ENCODE measurements at regions of chr17 and their contacts with region 1.

Region 1: DNA sequence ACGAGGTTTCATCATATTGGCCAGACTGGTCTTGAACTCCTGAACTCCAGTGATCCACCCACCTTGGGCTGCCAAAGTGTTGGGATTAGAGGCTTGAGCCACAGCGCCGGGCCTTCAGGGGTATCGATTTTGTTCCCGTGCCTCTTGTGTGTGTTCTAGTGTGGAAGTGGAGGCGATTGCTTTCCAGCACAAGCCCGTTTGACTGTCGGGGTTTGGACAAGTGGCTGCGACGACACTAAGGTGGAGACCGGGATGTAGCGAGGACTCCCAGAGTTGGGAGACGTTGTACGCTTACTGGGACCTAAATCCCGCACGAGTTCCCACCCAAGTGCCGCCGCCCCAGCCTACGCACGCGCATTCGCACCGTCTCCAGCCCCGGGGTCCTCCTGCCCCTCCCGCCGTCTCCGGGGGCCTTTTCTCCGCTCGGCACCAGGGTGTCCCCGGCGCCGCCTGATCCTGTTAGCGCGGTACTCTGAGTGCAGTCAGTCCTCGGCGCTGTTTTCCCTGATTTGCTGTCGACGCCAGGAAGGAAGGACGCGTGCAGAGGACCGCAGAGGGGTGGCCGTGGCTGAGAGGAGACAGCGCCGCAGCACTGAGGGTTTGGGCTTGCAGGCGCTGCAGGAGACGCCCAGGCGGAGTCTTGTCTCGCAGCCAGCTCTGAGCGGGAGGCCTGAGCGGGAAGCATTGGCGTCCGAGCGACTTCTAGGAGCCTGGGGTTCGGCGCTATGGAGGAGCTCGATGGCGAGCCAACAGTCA is at the start of gene NUP85:
- DNase-seq: peak; percentile 92 to 94 (median 93)
- ATAC-seq: peak; percentile 97
- H3K4me3 ChIP-seq: peak within 1 kb of the TSS; percentile 73 to 95
- H3K27ac ChIP-seq: peak within 1 kb of the TSS; percentile 91 to 99 (median 94)
- H3K4me1 ChIP-seq: peaks cover 20% of the 10 kb centered on the region
- H3K27me3 ChIP-seq: no peaks in the 10 kb centered on the region
- CTCF ChIP-seq: no peak
- POLR2A ChIP-seq: peak; percentile 61 to 87 (median 84)
- total RNA-seq, gene NUP85: 19.7 to 40.2 TPM

Region 2: DNA sequence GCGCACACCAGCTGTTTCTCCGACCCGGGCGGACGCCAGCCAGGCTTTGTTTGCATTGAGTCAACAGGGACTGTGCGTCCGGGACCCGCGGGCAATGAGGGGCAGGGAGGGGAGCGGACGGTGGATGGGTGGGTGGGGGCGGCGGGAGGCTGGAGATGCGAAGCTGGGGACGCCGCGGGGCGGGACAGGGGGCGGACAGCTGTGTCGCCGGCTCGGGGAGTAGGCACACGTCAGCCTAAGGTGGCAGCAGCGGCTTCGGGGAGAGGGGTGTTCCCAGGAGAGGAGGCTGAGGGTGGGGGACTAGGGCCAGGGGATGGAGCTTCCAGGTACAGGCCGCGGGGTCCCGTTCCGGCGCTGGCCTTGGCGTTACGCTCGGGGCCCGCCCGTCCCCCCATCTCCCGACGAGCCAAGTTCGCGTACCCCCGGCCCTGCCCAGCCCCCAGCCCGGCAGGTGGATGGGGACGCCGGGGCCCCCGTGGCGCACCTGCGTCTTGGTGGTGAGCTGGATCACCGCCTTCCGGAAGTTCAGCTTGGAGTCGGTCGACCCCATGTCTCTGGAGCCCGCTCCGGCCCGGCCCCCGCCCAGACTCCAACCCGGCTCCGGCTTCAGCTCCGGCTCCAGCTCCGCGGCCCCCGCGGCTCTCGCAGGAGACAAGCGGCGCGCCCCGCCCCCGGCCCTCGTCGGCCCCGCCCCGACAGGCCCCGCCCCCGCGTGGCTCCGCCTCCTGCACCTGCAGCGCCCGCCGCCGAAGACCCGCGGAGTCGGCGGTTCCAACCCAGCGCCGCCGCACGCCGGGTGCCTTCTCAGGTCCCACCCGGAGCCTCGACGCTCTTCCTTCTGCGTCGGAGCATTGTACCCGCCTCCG is 232.9 kb before region 1 on chr17 and contains the start of gene HID1:
- intact Hi-C with region 1: no loop called
- DNase-seq: peak; percentile 86 to 93 (median 87)
- ATAC-seq: peak; percentile 75
- H3K4me3 ChIP-seq: peak within 1 kb of the TSS; percentile 73 to 99
- H3K27ac ChIP-seq: peak within 1 kb of the TSS; percentile 94 to 97 (median 95)
- H3K4me1 ChIP-seq: peaks cover 69% of the 10 kb centered on the region
- H3K27me3 ChIP-seq: no peaks in the 10 kb centered on the region
- CTCF ChIP-seq: no peak
- POLR2A ChIP-seq: peak; percentile 72 to 79 (median 78)
- total RNA-seq, gene HID1: 157 to 164 TPM

Region 3: DNA sequence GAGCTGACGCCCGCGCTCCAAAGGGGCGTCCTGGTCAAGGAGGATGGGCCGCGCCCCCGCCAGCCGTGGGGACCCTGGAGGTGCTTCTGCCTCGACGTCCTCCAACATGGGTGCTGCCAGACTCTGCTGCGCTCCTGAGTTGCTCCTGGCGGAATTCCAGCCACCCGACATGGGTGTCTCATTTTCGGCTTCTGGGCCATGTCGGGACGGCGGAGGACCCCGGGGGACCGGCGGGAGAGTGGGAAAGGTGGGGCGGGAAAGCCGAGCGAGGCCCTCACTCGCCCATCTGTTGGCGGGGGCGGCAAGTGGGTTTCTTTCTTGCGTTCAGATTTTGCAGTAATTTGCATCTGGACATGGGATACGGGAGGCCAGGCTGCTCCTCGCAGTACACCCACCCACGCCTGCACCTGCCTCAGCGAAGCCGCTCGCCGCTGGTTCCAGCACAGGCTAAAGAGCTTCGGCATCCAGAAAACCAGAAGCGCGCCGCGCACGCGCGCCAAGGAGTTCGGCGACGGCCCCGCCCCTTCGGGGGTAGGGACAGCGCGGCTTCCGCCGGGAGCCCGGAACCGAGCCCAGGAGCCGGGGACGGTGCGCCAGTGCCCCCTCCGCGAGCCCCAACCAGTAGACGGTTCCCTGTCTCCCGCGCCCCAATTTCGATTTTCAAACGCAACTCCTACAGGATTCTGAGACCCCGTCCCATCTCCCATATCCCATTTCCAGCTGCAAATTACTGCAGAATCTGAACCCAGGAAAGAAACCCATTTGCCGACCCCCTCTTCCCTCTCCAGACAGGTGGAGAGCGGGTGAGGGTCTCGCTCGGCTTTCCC is 95.6 kb before region 1 on chr17 and contains the start of gene ARMC7:
- intact Hi-C with region 1: loop called (anchors 10 kb)
- DNase-seq: peak; percentile 92 to 93 (median 92)
- ATAC-seq: peak; percentile 82
- H3K4me3 ChIP-seq: peak within 1 kb of the TSS; percentile 41 to 88
- H3K27ac ChIP-seq: peak within 1 kb of the TSS in 3 of 4 donors; percentile 63 to 66 (median 65)
- H3K4me1 ChIP-seq: peaks cover 41% of the 10 kb centered on the region
- H3K27me3 ChIP-seq: no peaks in the 10 kb centered on the region
- CTCF ChIP-seq: no peak
- POLR2A ChIP-seq: peak; percentile 47 to 80 (median 78)
- total RNA-seq, gene ARMC7: 6.7 to 7.9 TPM

Region 4: DNA sequence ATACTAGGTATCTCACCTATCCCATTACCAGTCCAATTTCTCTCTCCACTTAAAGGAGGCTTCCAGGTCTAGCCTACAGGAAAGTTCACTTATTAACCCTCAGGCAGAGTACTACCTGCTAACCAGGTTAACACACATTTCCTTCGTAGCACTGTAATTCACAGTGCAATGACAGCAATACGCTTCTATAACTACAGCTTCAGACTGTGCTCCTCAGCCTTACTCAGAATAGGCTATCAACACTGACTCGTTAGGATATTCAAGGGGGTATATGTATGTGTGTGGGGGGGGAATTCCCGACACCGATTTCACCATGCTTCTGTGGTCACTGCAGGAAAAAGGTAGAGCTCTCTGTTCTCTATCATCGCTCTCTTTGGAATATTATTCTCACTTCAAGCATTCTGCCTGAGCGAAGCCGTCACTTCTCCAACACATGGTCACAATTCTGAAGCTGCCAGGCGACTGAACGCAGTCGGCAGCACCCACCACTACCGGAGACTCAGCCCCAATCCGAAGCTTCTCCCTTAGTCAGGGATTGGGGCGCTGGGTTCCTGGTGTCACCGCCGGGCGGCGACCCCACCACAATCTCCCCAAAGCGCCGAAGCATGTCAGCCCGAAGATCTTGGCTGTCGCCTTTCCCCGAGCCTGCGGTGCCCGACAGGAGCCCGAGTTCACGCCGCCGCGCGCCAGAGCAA is 55.6 kb after region 1 on chr17:
- intact Hi-C with region 1: no loop called
- DNase-seq: no peak
- ATAC-seq: peak; percentile 7
- H3K4me3 ChIP-seq: peak overlapping the region; percentile 87 to 93
- H3K27ac ChIP-seq: peak overlapping the region; percentile 79 to 99 (median 94)
- H3K4me1 ChIP-seq: peaks cover 24% of the 10 kb centered on the region
- H3K27me3 ChIP-seq: no peaks in the 10 kb centered on the region
- CTCF ChIP-seq: peak in 1 of 7 experiments; percentile 17
- POLR2A ChIP-seq: no peak